HepG2 (cell line): ENCODE measurements at regions of chr6 and their contacts with region 1.

Region 1: DNA sequence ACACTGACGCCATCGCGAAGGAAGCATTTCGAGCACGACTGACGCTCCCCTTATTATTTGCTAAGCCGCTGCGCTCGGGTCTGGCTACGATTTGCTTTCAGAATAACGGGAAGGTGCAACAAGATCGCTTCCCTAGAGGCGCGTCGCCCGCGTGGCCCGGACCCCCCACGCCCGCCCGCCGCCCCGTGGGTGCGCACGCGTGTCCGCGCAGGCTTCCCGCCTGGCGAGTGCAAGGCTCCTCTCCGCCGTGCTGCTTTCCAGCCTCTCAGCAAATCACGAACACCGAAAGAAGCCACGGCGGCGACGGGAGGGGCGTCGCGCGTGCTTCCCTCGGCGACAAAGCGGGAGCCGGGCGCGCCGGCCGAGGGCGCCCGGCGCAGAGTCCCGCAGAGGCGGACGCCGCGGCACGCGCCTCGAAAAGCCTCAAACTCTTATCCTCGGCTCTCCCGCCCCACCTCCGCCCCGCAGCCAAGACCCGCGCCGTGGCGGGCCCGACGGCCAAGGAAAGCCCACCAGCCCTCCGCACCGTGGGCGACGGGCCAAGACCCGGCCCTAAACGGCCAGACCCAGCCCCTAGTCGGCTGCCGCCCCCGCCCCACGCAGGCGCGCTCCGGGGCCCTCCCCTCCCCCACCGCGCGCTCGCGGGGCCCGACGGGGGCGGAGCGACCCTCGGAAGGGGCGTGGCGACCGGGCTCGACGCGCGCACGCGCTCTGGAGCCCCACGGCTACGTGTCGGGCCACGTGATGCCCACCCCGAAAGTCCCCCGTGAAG is 987 bp upstream of the QKI start:
- DNase-seq: peak; percentile 88
- ATAC-seq: peak; percentile 63
- H3K4me3 ChIP-seq: peak overlapping the region; percentile 75 to 97 (median 87)
- H3K27ac ChIP-seq: peak overlapping the region; percentile 98
- H3K4me1 ChIP-seq: peaks cover 53% of the 10 kb centered on the region
- H3K27me3 ChIP-seq: no peaks in the 10 kb centered on the region; a peak in 1 of 5 replicates
- CTCF ChIP-seq: no peak
- EP300 ChIP-seq: peak; percentile 22 to 45; a peak in 2 of 4 replicates
- POLR2A ChIP-seq: peak; percentile 84 to 89
- RAD21 ChIP-seq: peak; percentile 76

Region 2: DNA sequence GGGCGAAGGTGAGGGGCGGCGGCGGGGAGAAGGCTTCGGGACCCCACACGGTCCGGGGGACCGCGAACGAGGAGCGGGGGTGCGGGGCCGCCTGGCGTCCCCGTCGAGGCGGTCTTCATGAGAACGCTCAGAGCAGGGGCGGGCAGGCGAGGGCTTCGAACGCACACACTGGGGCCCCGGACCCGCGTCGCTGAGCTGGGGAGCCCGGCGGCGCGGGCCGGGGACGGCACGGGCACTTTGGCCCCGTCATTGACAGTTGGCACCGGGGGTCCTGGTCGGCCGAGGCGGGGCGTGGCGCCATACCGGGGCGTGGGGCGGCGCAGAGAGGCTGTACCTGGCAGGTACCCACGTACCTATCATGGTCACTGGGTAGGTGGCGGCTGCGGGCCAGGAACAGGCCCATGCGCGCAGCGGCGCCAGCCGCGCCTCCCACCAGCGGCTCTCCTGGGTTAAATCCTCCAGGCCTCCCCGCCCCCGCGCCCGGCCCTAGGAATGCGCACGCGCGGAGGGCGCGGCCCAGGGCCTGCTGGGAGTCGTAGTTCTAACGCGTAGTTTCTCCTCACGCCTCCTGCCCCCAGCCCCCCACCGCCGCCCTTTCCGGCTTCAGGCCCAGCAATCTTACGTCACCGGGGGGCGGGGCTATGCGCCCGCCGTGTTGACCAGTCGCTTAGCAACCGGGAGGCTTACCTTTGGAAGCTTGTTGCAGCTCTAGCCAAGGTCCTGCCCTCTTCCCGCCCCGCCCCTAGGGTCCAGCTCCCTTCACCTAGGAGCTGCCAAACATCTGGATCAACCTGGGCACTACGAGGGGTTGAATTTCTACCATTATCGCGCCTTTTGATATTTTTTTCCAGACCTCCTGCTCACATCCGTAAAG is 686.0 kb before region 1 on chr6 and contains the starts of genes PACRG and PRKN:
- CTCF ChIA-PET with region 1: no interaction called
- POLR2A ChIA-PET with region 1: no interaction called
- in situ Hi-C with region 1: no loop called
- intact Hi-C with region 1: loop called (anchors 10 kb)
- DNase-seq: peak; percentile 98
- ATAC-seq: peak; percentile 98
- H3K4me3 ChIP-seq: peak within 1 kb of the TSS; percentile 70 to 80 (median 74)
- H3K27ac ChIP-seq: peak within 1 kb of the TSS; percentile 4
- H3K4me1 ChIP-seq: peaks cover 14% of the 10 kb centered on the region
- H3K27me3 ChIP-seq: no peaks in the 10 kb centered on the region
- CTCF ChIP-seq: peak; percentile 35; the same call in 1 of the 2 replicates
- EP300 ChIP-seq: peak; percentile 58 to 66; a peak in 3 of 4 replicates
- POLR2A ChIP-seq: peak; percentile 66 to 76; a peak in 3 of 4 replicates
- RAD21 ChIP-seq: no peak; the same call in none of the 2 replicates
- total RNA-seq, gene PACRG: 0.13 TPM in 1 of 2 replicates, not detected in the other
- total RNA-seq, gene PRKN: 0.18 and 0.31 TPM in 2 replicates

Region 3: GRCh38 chr6:162856885-162857284 is 556.6 kb before region 1 on chr6:
- CTCF ChIA-PET with region 1: no interaction called
- POLR2A ChIA-PET with region 1: no interaction called
- in situ Hi-C with region 1: no loop called
- intact Hi-C with region 1: loop called (anchors 5 kb)
- DNase-seq: peak; percentile 64
- ATAC-seq: peak; percentile 98
- H3K4me3 ChIP-seq: no peak overlapping the region
- H3K27ac ChIP-seq: no peak overlapping the region
- H3K4me1 ChIP-seq: no peaks in the 10 kb centered on the region
- H3K27me3 ChIP-seq: no peaks in the 10 kb centered on the region
- CTCF ChIP-seq: peak; percentile 73
- EP300 ChIP-seq: no peak
- POLR2A ChIP-seq: no peak
- RAD21 ChIP-seq: peak; percentile 56

Region 4: GRCh38 chr6:163180874-163181541 is 232.5 kb before region 1 on chr6:
- CTCF ChIA-PET with region 1: interaction called, 6 read pairs
- POLR2A ChIA-PET with region 1: interaction called, 5 read pairs
- in situ Hi-C with region 1: loop called (anchors 5 kb)
- intact Hi-C with region 1: loop called (anchors 1 kb)
- DNase-seq: peak; percentile 91
- ATAC-seq: peak; percentile 100
- H3K4me3 ChIP-seq: peak overlapping the region in 1 of 3 experiments; percentile 24; a peak in 2 of 6 replicates
- H3K27ac ChIP-seq: peak overlapping the region; percentile 4
- H3K4me1 ChIP-seq: peaks cover 18% of the 10 kb centered on the region
- H3K27me3 ChIP-seq: peaks cover 0 to 12% of the 10 kb centered on the region in 2 experiments; a peak in 4 of 5 replicates
- CTCF ChIP-seq: peak; percentile 99
- EP300 ChIP-seq: peak; percentile 79 to 89
- POLR2A ChIP-seq: no peak
- RAD21 ChIP-seq: peak; percentile 99

Region 5: DNA sequence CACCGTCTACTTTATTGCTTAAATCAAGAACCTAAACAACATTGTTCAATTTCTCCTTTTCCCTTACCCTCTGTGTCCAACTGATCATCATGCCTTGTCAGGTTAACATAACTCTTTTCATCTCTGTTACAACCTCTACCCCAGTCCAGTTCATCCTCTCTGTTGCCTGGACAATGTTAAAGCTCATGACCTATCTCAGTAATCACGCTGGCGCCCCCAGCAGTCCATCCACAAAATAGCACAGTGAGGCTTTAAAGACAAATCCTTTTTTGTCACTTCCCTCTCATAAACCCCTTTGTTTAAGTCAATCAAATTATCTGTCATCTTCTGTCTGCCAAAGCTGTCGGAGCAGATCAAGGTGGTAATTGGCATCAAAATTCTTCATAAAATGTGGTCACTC is 141.1 kb after region 1 on chr6:
- CTCF ChIA-PET with region 1: interaction called, 8 read pairs
- POLR2A ChIA-PET with region 1: no interaction called
- in situ Hi-C with region 1: no loop called
- intact Hi-C with region 1: loop called (anchors 2 kb)
- DNase-seq: peak; percentile 66
- ATAC-seq: peak; percentile 84
- H3K4me3 ChIP-seq: no peak overlapping the region
- H3K27ac ChIP-seq: no peak overlapping the region
- H3K4me1 ChIP-seq: no peaks in the 10 kb centered on the region
- H3K27me3 ChIP-seq: no peaks in the 10 kb centered on the region
- CTCF ChIP-seq: peak; percentile 81
- EP300 ChIP-seq: no peak
- POLR2A ChIP-seq: no peak
- RAD21 ChIP-seq: peak; percentile 63

Region 6: DNA sequence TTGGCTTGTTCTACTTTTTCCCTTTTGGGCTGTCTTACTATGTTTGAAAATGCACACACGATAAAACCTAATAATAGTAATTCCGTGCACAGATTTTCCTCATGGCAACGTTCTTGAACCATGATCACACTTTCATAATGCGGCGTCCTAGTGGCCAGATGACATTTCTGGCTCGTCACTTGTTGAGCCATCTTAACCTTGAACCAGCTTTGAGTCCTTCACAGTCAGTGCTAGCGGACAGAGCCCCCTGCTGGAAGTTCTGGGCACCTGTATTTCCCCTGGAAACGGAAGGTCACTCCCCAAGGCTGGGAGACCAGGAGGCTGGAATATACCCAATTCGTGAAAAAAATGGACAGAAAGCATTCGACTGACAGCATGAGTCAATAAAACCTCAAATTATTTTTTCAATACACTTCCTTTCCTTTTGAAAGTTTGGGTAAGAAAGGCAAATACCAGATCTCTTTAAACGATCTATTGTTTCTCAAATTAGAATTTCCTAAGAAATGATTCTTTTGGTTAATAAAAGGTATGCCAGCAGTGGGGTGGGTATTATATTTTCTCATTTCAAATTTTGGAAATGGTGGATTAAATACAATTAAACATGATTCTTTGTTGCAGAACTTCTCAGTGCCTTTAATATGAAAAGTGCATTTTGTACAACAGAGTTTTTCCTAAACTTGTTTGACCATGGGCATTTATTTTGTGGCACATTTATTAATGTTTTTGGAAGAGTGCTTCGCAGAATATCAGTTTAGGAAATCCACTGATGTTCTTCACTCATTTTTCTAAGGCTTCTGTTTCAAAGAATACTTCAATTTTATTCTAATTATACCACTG is 543.3 kb after region 1 on chr6:
- CTCF ChIA-PET with region 1: no interaction called
- POLR2A ChIA-PET with region 1: no interaction called
- in situ Hi-C with region 1: no loop called
- intact Hi-C with region 1: loop called (anchors 2 kb)
- DNase-seq: peak; percentile 82
- ATAC-seq: peak; percentile 98
- H3K4me3 ChIP-seq: no peak overlapping the region
- H3K27ac ChIP-seq: no peak overlapping the region
- H3K4me1 ChIP-seq: no peaks in the 10 kb centered on the region
- H3K27me3 ChIP-seq: peaks cover 0 to 36% of the 10 kb centered on the region in 2 experiments; a peak in 2 of 5 replicates
- CTCF ChIP-seq: peak; percentile 93
- EP300 ChIP-seq: peak in 1 of 2 experiments; percentile 24; a peak in 1 of 4 replicates
- POLR2A ChIP-seq: no peak
- RAD21 ChIP-seq: peak; percentile 86

Region 7: GRCh38 chr6:164106345-164106769 is 692.8 kb after region 1 on chr6:
- CTCF ChIA-PET with region 1: no interaction called
- POLR2A ChIA-PET with region 1: no interaction called
- in situ Hi-C with region 1: loop called (anchors 25 kb)
- intact Hi-C with region 1: no loop called
- DNase-seq: peak; percentile 16
- ATAC-seq: peak; percentile 83
- H3K4me3 ChIP-seq: peak overlapping the region in 1 of 3 experiments; percentile 17; a peak in 1 of 6 replicates
- H3K27ac ChIP-seq: no peak overlapping the region
- H3K4me1 ChIP-seq: peaks cover 6% of the 10 kb centered on the region; the same call in 1 of the 2 replicates
- H3K27me3 ChIP-seq: peaks cover 0 to 30% of the 10 kb centered on the region in 2 experiments; a peak in 3 of 5 replicates
- CTCF ChIP-seq: peak; percentile 76
- EP300 ChIP-seq: no peak
- POLR2A ChIP-seq: no peak
- RAD21 ChIP-seq: peak; percentile 43; the same call in 1 of the 2 replicates